Naive thymus-derived CD4-positive, alpha-beta T cell (primary cell): ENCODE measurements at regions of chr2 and their contacts with region 1.

Region 1: DNA sequence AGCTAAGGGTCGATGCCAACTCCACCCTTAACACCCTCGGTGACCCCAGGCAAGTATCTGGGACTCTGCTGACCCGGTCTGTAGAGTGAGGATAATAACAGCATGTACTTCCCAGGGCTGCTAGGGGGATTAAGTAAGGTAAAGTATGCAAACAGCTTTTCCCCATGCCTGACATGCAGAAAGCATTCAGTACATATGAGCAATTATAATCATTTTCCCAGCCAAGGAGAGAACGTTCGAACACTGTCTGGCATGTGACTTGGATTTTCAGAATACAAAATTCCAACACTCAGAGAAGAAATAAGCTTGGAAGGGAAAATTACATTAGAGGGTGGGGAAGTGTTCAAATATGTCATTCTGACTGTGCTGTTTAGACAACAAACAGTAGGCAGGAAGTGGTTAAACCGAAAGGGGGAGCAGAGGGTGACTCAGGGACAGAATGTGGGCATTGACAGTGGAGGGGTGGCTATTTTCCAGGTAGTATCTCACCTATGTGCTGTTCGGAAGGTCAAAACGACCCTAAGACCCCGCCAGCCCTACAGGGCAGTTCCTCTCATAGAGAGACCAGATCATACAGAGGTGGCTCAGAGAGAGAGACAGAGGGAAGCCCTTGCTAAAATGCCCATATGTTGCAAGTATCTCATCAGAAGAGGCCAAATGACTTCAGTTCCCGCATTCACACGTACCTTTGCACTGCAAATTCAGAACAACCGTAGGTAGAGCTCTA is 14.9 kb downstream of the ASPRV1 start:
- DNase-seq: peak in 8 of 9 donors; percentile 24 to 64 (median 56)
- ATAC-seq: peak; percentile 84
- H3K4me3 ChIP-seq: no peak overlapping the region
- H3K4me3 Mint-ChIP-seq: peak overlapping the region in 9 of 10 donors; percentile 11 to 70 (median 31)
- H3K27ac ChIP-seq: no peak overlapping the region
- H3K27ac Mint-ChIP-seq: peak overlapping the region; percentile 4 to 94 (median 69)
- H3K4me1 ChIP-seq: peaks cover 16 to 17% of the 10 kb centered on the region in 2 donors
- H3K4me1 Mint-ChIP-seq: peaks cover 25 to 47% (median 33%) of the 10 kb centered on the region in 7 donors
- H3K27me3 ChIP-seq: no peaks in the 10 kb centered on the region
- H3K27me3 Mint-ChIP-seq: peaks cover 0 to 2% (median 0%) of the 10 kb centered on the region in 5 donors

Region 2: DNA sequence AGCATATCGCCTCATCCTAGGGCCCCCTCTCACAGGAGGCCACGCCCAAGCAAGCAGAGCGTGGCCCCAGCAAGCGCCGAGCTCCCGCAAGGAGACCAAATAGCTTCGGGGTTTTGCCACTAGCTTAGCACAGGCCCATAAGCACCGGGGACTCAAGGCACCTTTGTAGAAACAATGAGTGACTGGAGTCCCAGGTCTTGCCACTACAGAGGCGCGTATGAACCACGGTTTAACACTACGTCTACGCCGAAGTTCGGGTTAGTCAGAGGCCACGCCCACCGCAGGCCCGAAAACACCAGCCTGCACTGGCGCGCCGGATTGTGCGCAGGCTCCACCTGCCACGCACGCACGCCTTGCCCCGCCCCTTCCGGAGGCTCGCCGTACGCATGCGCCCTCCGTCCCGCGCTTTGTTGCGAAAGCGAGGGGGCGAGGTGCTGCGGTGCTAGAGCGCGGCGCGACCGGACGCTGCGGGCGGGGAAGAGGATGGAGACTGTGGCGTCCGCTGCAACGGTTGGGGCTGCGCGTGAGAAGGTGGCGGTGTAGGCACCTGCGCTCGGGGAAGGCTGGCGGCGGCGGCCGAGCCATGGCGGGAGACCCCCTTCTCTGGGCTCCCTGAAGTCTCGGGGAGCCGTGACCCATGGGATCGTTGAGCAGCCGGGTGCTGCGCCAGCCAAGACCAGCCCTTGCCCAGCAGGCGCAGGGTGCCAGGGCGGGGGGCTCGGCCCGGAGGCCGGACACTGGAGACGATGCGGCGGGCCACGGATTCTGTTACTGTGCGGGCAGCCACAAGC is 117.1 kb before region 1 on chr2 and contains the start of gene GMCL1:
- CTCF ChIA-PET with region 1: no interaction called
- POLR2A ChIA-PET with region 1: no interaction called
- intact Hi-C with region 1: no loop called
- DNase-seq: peak; percentile 98 to 100 (median 99)
- ATAC-seq: peak; percentile 97
- H3K4me3 ChIP-seq: peak within 1 kb of the TSS; percentile 81
- H3K4me3 Mint-ChIP-seq: peak within 1 kb of the TSS; percentile 83 to 97 (median 94)
- H3K27ac ChIP-seq: peak within 1 kb of the TSS; percentile 88
- H3K27ac Mint-ChIP-seq: peak within 1 kb of the TSS; percentile 89 to 97 (median 95)
- H3K4me1 ChIP-seq: peaks cover 10 to 17% of the 10 kb centered on the region in 2 donors
- H3K4me1 Mint-ChIP-seq: peaks cover 31 to 61% (median 54%) of the 10 kb centered on the region in 7 donors
- H3K27me3 ChIP-seq: no peaks in the 10 kb centered on the region
- H3K27me3 Mint-ChIP-seq: no peaks in the 10 kb centered on the region
- total RNA-seq, gene GMCL1: 24.9 to 30.5 (median 27.3) TPM

Region 3: GRCh38 chr2:70070541-70071268 is 124.2 kb after region 1 on chr2:
- CTCF ChIA-PET with region 1: no interaction called
- POLR2A ChIA-PET with region 1: no interaction called
- intact Hi-C with region 1: loop called in 1 of 2 experiments (anchors 1 kb)
- DNase-seq: peak in 8 of 9 donors; percentile 49 to 80 (median 70)
- ATAC-seq: peak; percentile 85
- H3K4me3 ChIP-seq: peak overlapping the region; percentile 48
- H3K4me3 Mint-ChIP-seq: peak overlapping the region; percentile 56 to 91 (median 80)
- H3K27ac ChIP-seq: peak overlapping the region; percentile 71
- H3K27ac Mint-ChIP-seq: peak overlapping the region; percentile 89 to 99 (median 95)
- H3K4me1 ChIP-seq: peaks cover 35 to 36% of the 10 kb centered on the region in 2 donors
- H3K4me1 Mint-ChIP-seq: peaks cover 19 to 72% (median 63%) of the 10 kb centered on the region in 7 donors
- H3K27me3 ChIP-seq: no peaks in the 10 kb centered on the region
- H3K27me3 Mint-ChIP-seq: no peaks in the 10 kb centered on the region